ENCODE measurements at regions of chr6 and their contacts with region 1.

Region 1: GRCh38 chr6:2870056-2870674 is 28.5 kb upstream of the SERPINB1 start:
- DNase-seq: no peak
- ATAC-seq: no peak
- H3K4me3 ChIP-seq: no peak overlapping the region
- H3K27ac ChIP-seq: no peak overlapping the region
- H3K4me1 ChIP-seq: peaks cover 41% of the 10 kb centered on the region
- H3K27me3 ChIP-seq: no peaks in the 10 kb centered on the region
- CTCF ChIP-seq: no peak
- EP300 ChIP-seq: no peak
- POLR2A ChIP-seq: no peak
- RAD21 ChIP-seq: no peak

Region 2: DNA sequence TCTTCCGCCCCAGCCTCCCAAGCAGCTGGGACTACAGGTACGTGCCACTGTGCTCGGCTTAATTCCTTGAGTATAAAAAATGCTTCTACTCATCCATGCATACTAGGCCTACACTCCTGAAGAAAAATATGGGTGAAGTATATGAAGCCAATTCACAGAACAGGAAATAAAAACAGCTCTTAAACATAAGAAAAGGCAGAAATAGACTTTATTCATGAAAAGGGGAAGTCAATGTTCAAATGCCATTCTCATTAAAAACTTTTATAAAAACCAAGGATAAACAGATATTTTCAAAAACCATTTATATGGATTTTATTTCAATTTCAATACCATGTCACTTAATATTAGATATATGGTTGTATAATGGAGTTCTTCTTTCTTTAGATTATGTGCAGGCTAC is 14.6 kb after region 1 on chr6:
- CTCF ChIA-PET with region 1: interaction called, 11 read pairs
- POLR2A ChIA-PET with region 1: interaction called, 9 read pairs
- RAD21 ChIA-PET with region 1: interaction called, 6 read pairs
- SMC1A ChIA-PET with region 1: interaction called, 69 read pairs
- in situ Hi-C with region 1: no loop called
- intact Hi-C with region 1: no loop called
- DNase-seq: no peak
- ATAC-seq: no peak
- H3K4me3 ChIP-seq: no peak overlapping the region
- H3K27ac ChIP-seq: no peak overlapping the region
- H3K4me1 ChIP-seq: peaks cover 6% of the 10 kb centered on the region; the same call in 1 of the 2 replicates
- H3K27me3 ChIP-seq: no peaks in the 10 kb centered on the region
- CTCF ChIP-seq: no peak
- EP300 ChIP-seq: no peak
- POLR2A ChIP-seq: no peak
- RAD21 ChIP-seq: no peak

Measured in GM12878 (cell line).